ENCODE measurements at regions of chr10 and their contacts with region 1.

Region 1: DNA sequence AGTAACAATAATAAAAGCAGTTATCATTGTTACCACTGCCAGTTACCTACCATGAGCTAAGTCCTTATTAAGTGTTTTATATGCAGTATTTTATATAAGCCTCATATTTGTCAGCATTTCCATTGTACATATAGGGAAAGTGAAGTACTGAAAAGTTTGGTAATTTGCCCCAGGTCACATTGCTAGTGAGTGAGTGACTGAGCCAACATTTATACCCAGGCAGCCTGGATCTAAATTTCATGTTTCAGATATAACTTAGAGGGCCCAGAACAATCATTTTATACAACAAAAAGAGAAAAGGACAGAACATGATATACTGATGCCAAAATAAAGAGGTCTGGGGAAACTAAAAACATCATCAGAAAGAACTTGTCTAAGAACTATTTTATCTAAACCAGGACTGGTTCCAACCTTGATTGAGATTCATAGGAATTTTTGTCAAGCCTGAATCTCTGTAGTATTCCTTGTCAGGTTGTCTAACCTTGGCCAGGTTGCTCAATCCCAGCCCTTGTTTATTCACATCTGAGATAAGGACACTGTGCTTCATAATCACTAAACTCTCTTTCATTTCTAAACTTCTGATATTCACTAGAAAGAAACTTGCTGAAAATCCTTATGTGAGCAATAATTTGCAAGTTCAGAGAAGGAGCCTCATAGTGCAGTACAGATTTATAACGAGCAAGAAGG is 308.2 kb downstream of the IPMK start:
- DNase-seq: peak in 1 of 2 experiments; percentile 41
- H3K4me3 ChIP-seq: no peak overlapping the region
- H3K4me3 Mint-ChIP-seq: no peak overlapping the region
- H3K27ac Mint-ChIP-seq: no peak overlapping the region
- H3K4me1 ChIP-seq: peaks cover 12% of the 10 kb centered on the region
- H3K4me1 Mint-ChIP-seq: peaks cover 6% of the 10 kb centered on the region
- H3K27me3 ChIP-seq: no peaks in the 10 kb centered on the region
- H3K27me3 Mint-ChIP-seq: no peaks in the 10 kb centered on the region
- CTCF ChIP-seq: no peak

Region 2: DNA sequence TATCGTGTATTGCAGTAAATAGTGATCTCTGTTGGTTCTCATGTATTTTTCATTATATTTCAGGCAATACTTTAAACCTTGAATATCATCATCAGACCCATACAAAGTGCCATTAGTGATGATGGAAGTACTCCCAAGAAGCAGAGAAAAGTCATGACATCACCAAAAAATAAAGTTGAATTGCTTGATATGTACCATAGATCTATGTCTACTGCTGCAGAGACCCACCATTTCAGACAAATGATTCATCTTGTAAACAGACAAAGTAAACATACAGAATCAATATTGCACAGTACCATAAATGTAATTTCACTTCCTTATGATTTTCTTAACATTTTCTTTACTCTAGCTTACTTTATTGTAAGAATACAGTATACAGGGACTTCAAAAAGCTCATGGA is 39.6 kb before region 1 on chr10:
- CTCF ChIA-PET with region 1: no interaction called
- POLR2A ChIA-PET with region 1: no interaction called
- intact Hi-C with region 1: loop called (anchors 1 kb)
- DNase-seq: no peak
- H3K4me3 ChIP-seq: no peak overlapping the region
- H3K4me3 Mint-ChIP-seq: no peak overlapping the region
- H3K27ac Mint-ChIP-seq: no peak overlapping the region
- H3K4me1 ChIP-seq: peaks cover 8% of the 10 kb centered on the region
- H3K4me1 Mint-ChIP-seq: peaks cover 18% of the 10 kb centered on the region
- H3K27me3 ChIP-seq: no peaks in the 10 kb centered on the region
- H3K27me3 Mint-ChIP-seq: no peaks in the 10 kb centered on the region
- CTCF ChIP-seq: no peak

Region 3: GRCh38 chr10:57925044-57925443 is 34.4 kb before region 1 on chr10:
- CTCF ChIA-PET with region 1: no interaction called
- POLR2A ChIA-PET with region 1: no interaction called
- intact Hi-C with region 1: loop called (anchors 1 kb)
- DNase-seq: peak; percentile 38 to 44
- H3K4me3 ChIP-seq: no peak overlapping the region
- H3K4me3 Mint-ChIP-seq: no peak overlapping the region
- H3K27ac Mint-ChIP-seq: no peak overlapping the region
- H3K4me1 ChIP-seq: peaks cover 6% of the 10 kb centered on the region
- H3K4me1 Mint-ChIP-seq: peaks cover 16% of the 10 kb centered on the region
- H3K27me3 ChIP-seq: no peaks in the 10 kb centered on the region
- H3K27me3 Mint-ChIP-seq: peaks cover 3% of the 10 kb centered on the region
- CTCF ChIP-seq: no peak